ENCODE measurements at regions of chr9 and their contacts with region 1.

Region 1: GRCh38 chr9:15873569-15874177 is 320.8 kb downstream of the CCDC171 start:
- DNase-seq: no peak
- H3K4me3 ChIP-seq: no peak overlapping the region
- H3K27ac ChIP-seq: no peak overlapping the region
- H3K4me1 ChIP-seq: no peaks in the 10 kb centered on the region
- H3K27me3 ChIP-seq: no peaks in the 10 kb centered on the region
- CTCF ChIP-seq: peak; percentile 53 to 77 (median 64)
- POLR2A ChIP-seq: no peak

Region 2: GRCh38 chr9:16138561-16139491 is 265.2 kb after region 1 on chr9:
- intact Hi-C with region 1: loop called in 1 of 2 experiments (anchors 5 kb)
- DNase-seq: peak in 2 of 7 donors; percentile 26 to 27
- H3K4me3 ChIP-seq: no peak overlapping the region
- H3K27ac ChIP-seq: peak overlapping the region in 1 of 5 donors; percentile 14
- H3K4me1 ChIP-seq: no peaks in the 10 kb centered on the region
- H3K27me3 ChIP-seq: no peaks in the 10 kb centered on the region
- CTCF ChIP-seq: no peak
- POLR2A ChIP-seq: no peak

Measured in adrenal gland (tissue), 19 donors.